ENCODE measurements at regions of chr3 and their contacts with region 1.

Region 1: DNA sequence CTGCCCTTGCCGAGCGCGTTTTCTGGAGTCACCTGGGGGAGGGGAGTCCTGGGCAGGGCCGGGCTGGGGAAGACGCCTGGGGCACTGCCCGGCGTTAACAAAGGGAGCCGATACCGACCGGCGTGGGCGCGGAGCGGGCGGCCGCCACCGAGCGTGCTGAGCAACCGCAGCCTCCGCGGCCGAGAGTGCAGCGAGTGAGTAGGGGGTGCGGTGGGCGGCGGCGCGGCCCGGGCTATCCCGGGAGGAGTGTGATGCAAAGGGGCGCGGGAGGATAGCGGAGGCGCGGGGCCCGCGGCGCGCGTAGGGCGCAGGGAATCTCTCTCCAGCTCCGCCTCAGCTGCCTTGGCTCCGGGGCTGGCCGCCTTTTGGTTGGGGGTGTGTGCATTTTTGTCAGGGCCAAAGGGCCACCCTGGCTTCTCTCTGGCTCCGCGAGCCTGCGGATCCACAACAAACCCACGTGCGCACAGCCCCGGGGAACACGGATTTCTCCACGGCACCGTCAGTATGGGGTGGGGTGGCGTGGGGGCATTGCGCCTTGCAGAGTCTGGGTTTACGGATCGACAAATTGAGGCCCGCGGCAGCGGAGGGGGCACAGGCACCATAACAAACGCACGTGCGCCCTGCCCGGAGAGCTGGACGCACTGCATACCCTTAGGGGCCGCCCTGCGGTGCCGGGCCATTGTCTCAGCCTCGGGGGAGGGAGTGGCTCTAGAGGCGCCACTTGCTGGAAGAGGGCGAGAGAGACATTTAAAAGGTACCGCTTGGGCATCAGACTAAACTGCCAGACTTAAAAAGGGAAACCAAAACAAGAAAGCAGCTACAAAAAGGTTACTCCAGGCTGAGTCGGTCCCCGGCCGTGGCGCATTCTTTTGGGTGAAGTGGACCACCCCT is 560 bp downstream of the ST6GAL1 start:
- DNase-seq: peak; percentile 60
- H3K4me3 Mint-ChIP-seq: peak overlapping the region; percentile 92
- H3K27ac Mint-ChIP-seq: peak overlapping the region; percentile 86
- H3K4me1 Mint-ChIP-seq: peaks cover 43% of the 10 kb centered on the region
- H3K27me3 Mint-ChIP-seq: no peaks in the 10 kb centered on the region

Region 2: GRCh38 chr3:186826976-186827731 is 103.7 kb before region 1 on chr3:
- intact Hi-C with region 1: loop called (anchors 2 kb)
- DNase-seq: peak; percentile 84
- H3K4me3 Mint-ChIP-seq: peak overlapping the region; percentile 91
- H3K27ac Mint-ChIP-seq: peak overlapping the region; percentile 65
- H3K4me1 Mint-ChIP-seq: peaks cover 21% of the 10 kb centered on the region
- H3K27me3 Mint-ChIP-seq: peaks cover 39% of the 10 kb centered on the region

Region 3: DNA sequence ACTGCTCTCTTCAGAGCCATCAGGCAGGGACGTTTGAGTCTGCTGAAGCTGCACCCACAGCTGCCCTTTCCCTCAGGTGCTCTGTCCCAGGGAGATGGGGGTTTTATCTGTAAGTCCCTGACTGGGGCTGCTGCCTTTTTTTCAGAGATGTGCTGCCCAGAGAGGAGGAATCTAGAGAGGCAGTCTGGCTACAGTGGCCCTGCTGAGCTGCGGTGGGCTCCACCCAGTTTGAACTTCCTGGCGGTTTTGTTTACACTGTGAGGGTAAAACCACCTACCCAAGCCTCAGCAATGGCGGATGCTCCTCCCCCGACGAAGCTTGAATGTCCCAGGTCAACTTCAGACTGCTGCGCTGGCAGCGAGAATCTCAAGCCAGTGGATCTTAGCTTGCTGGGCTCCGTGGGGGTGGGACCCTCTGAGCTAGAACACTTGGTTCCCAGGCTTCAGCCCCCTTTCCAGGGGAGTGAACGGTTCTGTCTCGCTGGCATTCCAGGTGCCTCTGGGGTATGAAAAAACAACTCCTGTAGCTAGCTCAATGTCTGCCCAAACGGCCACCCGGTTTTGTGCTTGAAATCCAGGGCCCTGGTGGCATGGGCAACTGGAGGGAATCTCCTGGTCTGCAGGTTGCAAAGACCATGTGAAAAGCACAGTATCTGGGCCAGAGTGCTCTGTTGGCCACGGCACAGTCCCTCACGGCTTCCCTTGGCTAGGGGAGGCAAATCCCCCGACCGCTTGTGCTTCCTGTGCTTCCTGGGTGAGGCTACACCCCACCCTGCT is 21.6 kb before region 1 on chr3:
- intact Hi-C with region 1: loop called (anchors 1 kb)
- DNase-seq: peak; percentile 78
- H3K4me3 Mint-ChIP-seq: peak overlapping the region; percentile 26
- H3K27ac Mint-ChIP-seq: peak overlapping the region; percentile 83
- H3K4me1 Mint-ChIP-seq: peaks cover 24% of the 10 kb centered on the region
- H3K27me3 Mint-ChIP-seq: no peaks in the 10 kb centered on the region

Region 4: GRCh38 chr3:187000711-187001151 is 69.8 kb after region 1 on chr3:
- intact Hi-C with region 1: loop called (anchors 1 kb)
- DNase-seq: no peak
- H3K4me3 Mint-ChIP-seq: peak overlapping the region; percentile 10
- H3K27ac Mint-ChIP-seq: peak overlapping the region; percentile 73
- H3K4me1 Mint-ChIP-seq: peaks cover 66% of the 10 kb centered on the region
- H3K27me3 Mint-ChIP-seq: no peaks in the 10 kb centered on the region

Region 5: DNA sequence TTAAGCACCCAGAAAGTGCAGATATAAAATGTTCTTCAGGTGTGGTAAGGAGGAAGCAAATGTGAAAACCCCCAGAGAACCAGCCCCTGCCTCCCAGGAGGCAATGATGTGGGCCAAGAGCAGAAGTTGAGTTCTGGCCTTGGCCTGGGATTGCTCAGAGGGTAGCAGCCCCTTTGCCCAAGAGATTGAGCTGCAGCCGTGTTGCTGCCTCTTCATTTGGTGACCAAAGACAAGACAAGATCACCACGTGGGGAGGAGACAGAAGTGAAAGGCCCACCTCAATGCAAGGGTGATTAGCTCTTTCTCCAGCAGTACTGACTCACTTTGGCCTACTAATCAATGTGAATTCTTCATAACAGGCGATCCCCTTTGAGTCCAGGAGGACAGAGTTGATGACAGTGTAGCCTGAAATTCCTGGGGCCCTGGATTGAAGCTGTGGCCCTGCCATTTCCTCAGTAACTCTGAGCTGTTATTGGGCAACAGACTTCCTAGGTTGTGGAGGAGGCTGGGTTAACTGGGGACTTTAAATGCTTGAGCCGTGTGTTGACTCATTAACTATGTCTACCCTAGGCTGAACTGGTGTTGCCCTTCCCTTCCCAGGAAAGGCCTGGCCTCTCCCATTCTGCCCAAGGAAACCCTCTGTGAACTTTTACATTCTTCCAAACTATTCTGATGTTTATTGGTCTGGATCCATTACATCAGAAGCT is 85.9 kb after region 1 on chr3:
- intact Hi-C with region 1: no loop called
- DNase-seq: no peak
- H3K4me3 Mint-ChIP-seq: no peak overlapping the region
- H3K27ac Mint-ChIP-seq: no peak overlapping the region
- H3K4me1 Mint-ChIP-seq: peaks cover 55% of the 10 kb centered on the region
- H3K27me3 Mint-ChIP-seq: no peaks in the 10 kb centered on the region

Region 6: DNA sequence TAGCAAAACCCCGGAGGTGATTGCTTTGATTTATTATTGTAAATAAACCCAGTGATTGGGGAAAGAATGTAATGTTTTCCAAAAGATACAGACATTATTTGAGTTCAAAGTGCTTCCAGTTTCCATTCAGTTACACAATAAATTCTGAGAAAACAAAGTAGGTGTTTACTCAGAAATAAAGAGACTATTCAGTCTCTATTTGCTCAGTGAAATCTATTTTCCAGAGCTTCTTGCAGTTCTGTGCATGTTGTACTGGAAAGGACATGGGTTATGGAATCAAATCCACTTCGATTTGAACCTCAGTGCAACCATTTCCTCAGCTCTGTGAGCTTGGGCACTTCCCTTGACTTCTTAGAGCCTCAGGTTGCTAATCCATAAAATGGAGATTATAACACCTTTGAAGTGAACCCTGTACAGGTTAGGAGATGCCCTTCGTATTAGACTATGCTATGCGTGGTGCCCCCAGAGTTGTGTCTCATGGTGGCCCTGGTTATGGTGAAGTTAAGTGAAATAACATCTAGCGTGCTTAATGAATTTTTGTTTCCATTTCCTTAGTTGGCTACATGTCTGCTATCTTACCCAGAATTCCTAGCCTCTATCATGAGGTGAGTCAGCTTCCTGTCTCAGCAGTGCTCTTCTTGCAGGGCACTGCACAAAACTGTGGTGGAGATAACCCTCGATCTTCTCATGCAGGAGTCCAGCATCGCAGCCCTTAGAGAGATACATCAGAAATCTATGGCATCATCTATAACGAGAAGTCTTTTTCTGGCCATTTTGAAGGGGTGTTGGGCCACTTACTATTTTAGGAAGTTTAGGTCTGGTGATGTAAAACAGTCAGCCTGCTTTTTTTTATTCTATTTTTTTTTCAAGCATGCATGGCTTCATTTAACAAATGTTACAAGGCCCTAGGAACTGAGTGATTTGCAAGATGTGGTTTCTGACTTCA is 110.7 kb after region 1 on chr3:
- intact Hi-C with region 1: no loop called
- DNase-seq: peak; percentile 61
- H3K4me3 Mint-ChIP-seq: peak overlapping the region; percentile 68
- H3K27ac Mint-ChIP-seq: peak overlapping the region; percentile 99
- H3K4me1 Mint-ChIP-seq: peaks cover 76% of the 10 kb centered on the region
- H3K27me3 Mint-ChIP-seq: no peaks in the 10 kb centered on the region

Region 7: GRCh38 chr3:187139126-187139894 is 208.4 kb after region 1 on chr3 and contains the start of gene RPL39L:
- intact Hi-C with region 1: loop called (anchors 5 kb)
- DNase-seq: peak; percentile 91
- H3K4me3 Mint-ChIP-seq: peak within 1 kb of the TSS; percentile 89
- H3K27ac Mint-ChIP-seq: peak within 1 kb of the TSS; percentile 94
- H3K4me1 Mint-ChIP-seq: peaks cover 32% of the 10 kb centered on the region
- H3K27me3 Mint-ChIP-seq: no peaks in the 10 kb centered on the region
- total RNA-seq, gene RPL39L: 11.0 and 13.0 TPM in 2 replicates

Measured in activated T-helper 2 cell treated with anti-CD3 and anti-CD28 coated beads, Interferon-gamma antibody, Interleukin-2, Interleukin-4, amounts not matched to agents 10 μg/mL and 5 μg/mL and 100 μg/mL, durations not matched to agents 14 hours and 24 hours and 36 hours (primary cell).